Ascending aorta (tissue), 2 donors: ENCODE measurements at regions of chr5 and their contacts with region 1.

Region 1: GRCh38 chr5:91383027-91383955 is at the start of gene ARRDC3:
- DNase-seq: peak; percentile 85 to 98
- H3K4me3 ChIP-seq: peak within 1 kb of the TSS; percentile 75 to 86
- H3K27ac ChIP-seq: peak within 1 kb of the TSS; percentile 95 to 98
- H3K4me1 ChIP-seq: peaks cover 4 to 8% of the 10 kb centered on the region in 2 donors
- H3K27me3 ChIP-seq: no peaks in the 10 kb centered on the region
- CTCF ChIP-seq: peak in 1 of 3 experiments; percentile 4
- total RNA-seq, gene ARRDC3: 30.1 TPM

Region 2: GRCh38 chr5:90529194-90529938 is 853.9 kb before region 1 on chr5 and contains the start of gene LYSMD3:
- intact Hi-C with region 1: loop called (anchors 5 kb)
- DNase-seq: peak; percentile 91 to 99
- H3K4me3 ChIP-seq: peak within 1 kb of the TSS; percentile 81 to 94
- H3K27ac ChIP-seq: peak within 1 kb of the TSS; percentile 90 to 96
- H3K4me1 ChIP-seq: peaks cover 8 to 12% of the 10 kb centered on the region in 2 donors
- H3K27me3 ChIP-seq: no peaks in the 10 kb centered on the region
- CTCF ChIP-seq: no peak
- total RNA-seq, gene LYSMD3: 4.0 TPM

Region 3: DNA sequence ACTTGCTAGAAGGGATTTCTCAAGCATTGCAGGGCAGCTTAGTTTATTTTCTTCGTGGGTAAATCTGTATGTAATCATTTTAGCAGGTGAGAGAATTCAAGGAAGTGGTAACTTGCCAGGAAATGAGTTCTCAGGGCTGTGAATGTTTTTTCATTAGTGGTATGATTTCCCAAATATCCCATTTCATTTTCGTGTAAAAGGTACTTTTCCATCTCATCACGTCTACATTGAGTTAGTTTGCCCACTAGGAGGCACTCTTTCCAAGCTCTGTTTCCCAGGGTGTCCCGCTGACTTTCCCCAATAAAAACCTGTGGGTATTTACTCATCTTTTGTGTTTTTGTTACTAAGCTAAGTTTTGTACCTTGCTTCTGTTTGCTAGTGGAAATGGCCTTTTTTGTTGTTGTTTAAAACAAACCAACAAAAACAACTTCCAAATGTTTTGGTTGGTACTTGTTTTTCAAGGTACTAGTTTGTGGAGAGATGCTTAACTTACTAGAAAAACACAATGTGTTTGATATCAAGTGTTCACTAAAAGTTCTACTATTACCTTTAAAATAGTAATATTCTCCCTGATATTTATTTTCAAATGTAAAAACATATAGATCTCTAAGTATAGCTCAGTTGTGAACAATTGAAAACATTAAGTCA is 451.1 kb before region 1 on chr5:
- intact Hi-C with region 1: loop called (anchors 1 kb)
- DNase-seq: peak in 1 of 2 donors; percentile 69
- H3K4me3 ChIP-seq: no peak overlapping the region
- H3K27ac ChIP-seq: no peak overlapping the region
- H3K4me1 ChIP-seq: peaks cover 0 to 3% of the 10 kb centered on the region in 2 donors
- H3K27me3 ChIP-seq: no peaks in the 10 kb centered on the region
- CTCF ChIP-seq: peak; percentile 52 to 79 (median 57)

Region 4: GRCh38 chr5:91101600-91102379 is 281.5 kb before region 1 on chr5:
- intact Hi-C with region 1: loop called (anchors 1 kb)
- DNase-seq: peak in 1 of 2 donors; percentile 86
- H3K4me3 ChIP-seq: no peak overlapping the region
- H3K27ac ChIP-seq: no peak overlapping the region
- H3K4me1 ChIP-seq: peaks cover 0 to 4% of the 10 kb centered on the region in 2 donors
- H3K27me3 ChIP-seq: no peaks in the 10 kb centered on the region
- CTCF ChIP-seq: peak; percentile 76 to 90 (median 79)

Region 5: GRCh38 chr5:91296691-91297143 is 86.6 kb before region 1 on chr5:
- intact Hi-C with region 1: loop called (anchors 5 kb)
- DNase-seq: peak in 1 of 2 donors; percentile 90
- H3K4me3 ChIP-seq: no peak overlapping the region
- H3K27ac ChIP-seq: peak overlapping the region; percentile 5 to 64
- H3K4me1 ChIP-seq: peaks cover 0 to 4% of the 10 kb centered on the region in 2 donors
- H3K27me3 ChIP-seq: no peaks in the 10 kb centered on the region
- CTCF ChIP-seq: no peak

Region 6: GRCh38 chr5:91397791-91398190 is 14.5 kb after region 1 on chr5:
- intact Hi-C with region 1: no loop called
- DNase-seq: no peak
- H3K4me3 ChIP-seq: no peak overlapping the region
- H3K27ac ChIP-seq: no peak overlapping the region
- H3K4me1 ChIP-seq: no peaks in the 10 kb centered on the region
- H3K27me3 ChIP-seq: no peaks in the 10 kb centered on the region
- CTCF ChIP-seq: no peak

Region 7: GRCh38 chr5:91456928-91457680 is 73.8 kb after region 1 on chr5:
- intact Hi-C with region 1: no loop called
- DNase-seq: no peak
- H3K4me3 ChIP-seq: no peak overlapping the region
- H3K27ac ChIP-seq: no peak overlapping the region
- H3K4me1 ChIP-seq: no peaks in the 10 kb centered on the region
- H3K27me3 ChIP-seq: no peaks in the 10 kb centered on the region
- CTCF ChIP-seq: no peak